ENCODE measurements at regions of chr6 and their contacts with region 1.

Region 1: DNA sequence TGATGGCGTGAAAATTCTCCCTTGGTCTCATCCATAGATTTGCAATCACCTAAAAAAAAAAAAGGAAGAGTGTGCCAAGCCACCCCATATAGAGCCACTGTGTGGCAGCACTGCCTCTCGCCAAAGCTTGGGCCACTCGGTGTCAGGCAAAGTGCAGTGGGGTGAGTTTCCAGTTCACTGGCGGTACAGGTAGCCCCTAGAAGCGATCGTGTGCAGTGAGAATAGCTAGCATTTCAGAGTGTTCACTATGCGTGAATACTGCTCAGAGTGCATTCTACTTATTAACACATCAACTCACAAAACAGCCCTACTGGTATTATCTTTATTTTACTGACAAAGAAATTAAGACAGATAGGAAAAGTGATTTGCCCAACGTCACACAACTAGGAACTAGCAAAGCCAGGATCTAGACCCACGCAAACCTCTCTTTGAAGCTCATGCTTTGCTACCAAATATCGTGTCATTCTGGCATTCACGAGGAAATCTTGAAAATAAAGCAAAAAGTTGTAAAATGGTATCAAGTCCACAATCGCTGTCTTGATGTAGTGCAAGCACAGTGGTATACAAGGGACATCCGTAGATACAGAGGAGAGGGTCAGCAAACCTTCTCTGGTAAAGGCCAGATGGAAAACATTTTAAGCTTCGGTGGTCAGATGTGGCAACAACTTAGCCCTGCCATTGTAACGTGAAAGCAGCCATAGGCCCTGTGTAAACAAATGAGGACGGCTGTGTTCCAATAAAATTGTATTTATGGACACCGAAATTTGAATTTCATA is 10.4 kb upstream of the GCNT2 start:
- DNase-seq: peak in 1 of 2 experiments; percentile 62
- H3K4me3 ChIP-seq: no peak overlapping the region
- H3K27ac ChIP-seq: no peak overlapping the region
- H3K4me1 ChIP-seq: peaks cover 0 to 3% (median 0%) of the 10 kb centered on the region in 4 experiments; a peak in 2 of 7 replicates
- H3K27me3 ChIP-seq: no peaks in the 10 kb centered on the region
- CTCF ChIP-seq: peak; percentile 77 to 91 (median 88)
- EP300 ChIP-seq: 0 out of 3 replicates have a peak, but pooled peaks of 1 of the 2 experiments have one; percentile 53
- POLR2A ChIP-seq: no peak
- RAD21 ChIP-seq: peak; percentile 98

Region 2: GRCh38 chr6:10521104-10521808 is 10.5 kb after region 1 on chr6 and contains the start of gene GCNT2:
- CTCF ChIA-PET with region 1: interaction called, 13 read pairs
- POLR2A ChIA-PET with region 1: interaction called, 5 read pairs
- DNase-seq: peak; percentile 59 to 78
- H3K4me3 ChIP-seq: peak within 1 kb of the TSS in 3 of 4 experiments; percentile 26 to 41 (median 35); a peak in 5 of 8 replicates
- H3K27ac ChIP-seq: peak within 1 kb of the TSS; percentile 1
- H3K4me1 ChIP-seq: peaks cover 10 to 30% (median 20%) of the 10 kb centered on the region in 4 experiments
- H3K27me3 ChIP-seq: no peaks in the 10 kb centered on the region
- CTCF ChIP-seq: no peak
- EP300 ChIP-seq: peak in 1 of 2 experiments; percentile 74; a peak in 1 of 3 replicates
- POLR2A ChIP-seq: peak; percentile 33 to 37; a peak in 2 of 3 replicates
- RAD21 ChIP-seq: peak in 1 of 2 experiments; percentile 11; a peak in 1 of 4 replicates
- total RNA-seq, gene GCNT2: 52.5 and 54.3 TPM in 2 replicates

Region 3: GRCh38 chr6:10561611-10562199 is 50.9 kb after region 1 on chr6:
- CTCF ChIA-PET with region 1: interaction called, 15 read pairs
- POLR2A ChIA-PET with region 1: interaction called, 3 read pairs
- DNase-seq: no peak
- H3K4me3 ChIP-seq: peak overlapping the region in 1 of 4 experiments; percentile 15; a peak in 2 of 8 replicates
- H3K27ac ChIP-seq: no peak overlapping the region
- H3K4me1 ChIP-seq: peaks cover 0 to 15% (median 4%) of the 10 kb centered on the region in 4 experiments; a peak in 5 of 7 replicates
- H3K27me3 ChIP-seq: no peaks in the 10 kb centered on the region
- CTCF ChIP-seq: no peak
- EP300 ChIP-seq: no peak
- POLR2A ChIP-seq: no peak
- RAD21 ChIP-seq: no peak

Region 4: GRCh38 chr6:10589429-10589727 is 78.6 kb after region 1 on chr6:
- CTCF ChIA-PET with region 1: interaction called, 10 read pairs
- POLR2A ChIA-PET with region 1: interaction called, 7 read pairs
- DNase-seq: no peak
- H3K4me3 ChIP-seq: no peak overlapping the region
- H3K27ac ChIP-seq: 0 out of 2 replicates have a peak overlapping the region, but pooled peaks have one; percentile 36
- H3K4me1 ChIP-seq: peaks cover 17 to 55% (median 44%) of the 10 kb centered on the region in 4 experiments
- H3K27me3 ChIP-seq: no peaks in the 10 kb centered on the region
- CTCF ChIP-seq: no peak
- EP300 ChIP-seq: no peak
- POLR2A ChIP-seq: no peak
- RAD21 ChIP-seq: no peak

Region 5: DNA sequence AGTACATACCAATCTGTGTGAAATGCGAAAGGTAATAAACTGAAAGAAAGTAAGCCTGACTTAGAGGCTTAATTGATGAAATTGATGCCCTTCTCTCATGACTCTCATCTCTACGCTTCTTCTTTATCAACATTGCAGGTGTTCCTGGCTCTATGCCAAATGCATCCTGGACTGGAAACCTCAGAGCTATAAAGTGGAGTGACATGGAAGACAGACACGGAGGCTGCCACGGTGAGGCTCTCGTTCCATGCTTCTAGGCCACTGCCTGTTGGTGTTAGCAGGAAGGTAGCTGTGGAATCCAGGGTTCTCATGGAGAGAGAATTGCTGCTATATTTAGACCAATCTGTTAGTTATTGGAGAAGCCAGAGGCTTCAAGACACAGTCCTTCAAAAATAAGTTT is 110.4 kb after region 1 on chr6:
- CTCF ChIA-PET with region 1: interaction called, 13 read pairs
- POLR2A ChIA-PET with region 1: interaction called, 4 read pairs
- DNase-seq: no peak
- H3K4me3 ChIP-seq: no peak overlapping the region
- H3K27ac ChIP-seq: no peak overlapping the region
- H3K4me1 ChIP-seq: no peaks in the 10 kb centered on the region
- H3K27me3 ChIP-seq: no peaks in the 10 kb centered on the region
- CTCF ChIP-seq: no peak
- EP300 ChIP-seq: no peak
- POLR2A ChIP-seq: no peak
- RAD21 ChIP-seq: no peak

Measured in H1 (cell line).